Activated CD4-positive, alpha-beta T cell treated with anti-CD3 and anti-CD28 coated beads for 36 hours (primary cell): ENCODE measurements at regions of chr20 and their contacts with region 1.

Region 1: GRCh38 chr20:33211817-33212424 is 5.2 kb upstream of the BPIFA3 start:
- DNase-seq: peak; percentile 53
- ATAC-seq: peak; percentile 44
- H3K4me3 Mint-ChIP-seq: no peak overlapping the region
- H3K27ac Mint-ChIP-seq: no peak overlapping the region
- H3K4me1 Mint-ChIP-seq: no peaks in the 10 kb centered on the region
- H3K27me3 Mint-ChIP-seq: peaks cover 34% of the 10 kb centered on the region

Region 2: DNA sequence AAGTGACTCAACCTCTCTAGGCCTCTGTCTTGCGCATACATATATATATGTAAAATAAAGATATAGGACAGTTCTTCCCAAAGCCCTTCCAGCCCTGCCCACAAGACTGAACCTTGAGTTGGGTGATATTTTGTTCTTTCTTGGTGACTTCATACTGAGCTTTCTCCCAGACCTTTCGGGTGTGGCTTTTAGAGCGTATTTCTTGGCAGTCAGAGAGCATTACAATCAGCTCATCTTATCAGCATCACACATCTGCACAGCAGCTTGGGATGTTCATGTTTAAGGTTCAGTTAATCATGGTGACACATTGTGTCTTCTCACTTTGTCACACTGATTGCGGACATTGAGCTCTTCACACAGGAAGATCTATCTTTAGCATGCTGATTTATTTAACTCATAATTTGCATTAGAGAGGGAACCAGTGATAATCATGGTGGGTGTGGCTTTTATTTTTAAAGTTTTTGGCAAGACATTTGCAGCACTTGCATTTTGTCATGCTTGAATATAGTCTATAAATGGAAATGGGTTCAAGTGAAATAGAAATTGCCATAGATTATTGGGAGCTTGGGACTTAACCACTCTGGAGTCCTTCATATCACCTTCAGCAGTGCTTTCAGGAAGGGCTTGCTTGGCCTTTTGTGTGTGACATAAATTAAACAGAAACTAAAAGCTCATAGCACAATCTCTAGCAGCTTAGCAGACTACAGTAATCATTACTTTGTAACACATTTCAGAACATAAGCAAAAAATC is 926.1 kb before region 1 on chr20:
- CTCF ChIA-PET with region 1: no interaction called
- POLR2A ChIA-PET with region 1: no interaction called
- intact Hi-C with region 1: no loop called
- DNase-seq: peak; percentile 70
- ATAC-seq: peak; percentile 83
- H3K4me3 Mint-ChIP-seq: peak overlapping the region; percentile 58
- H3K27ac Mint-ChIP-seq: peak overlapping the region; percentile 97
- H3K4me1 Mint-ChIP-seq: peaks cover 88% of the 10 kb centered on the region
- H3K27me3 Mint-ChIP-seq: no peaks in the 10 kb centered on the region

Region 3: DNA sequence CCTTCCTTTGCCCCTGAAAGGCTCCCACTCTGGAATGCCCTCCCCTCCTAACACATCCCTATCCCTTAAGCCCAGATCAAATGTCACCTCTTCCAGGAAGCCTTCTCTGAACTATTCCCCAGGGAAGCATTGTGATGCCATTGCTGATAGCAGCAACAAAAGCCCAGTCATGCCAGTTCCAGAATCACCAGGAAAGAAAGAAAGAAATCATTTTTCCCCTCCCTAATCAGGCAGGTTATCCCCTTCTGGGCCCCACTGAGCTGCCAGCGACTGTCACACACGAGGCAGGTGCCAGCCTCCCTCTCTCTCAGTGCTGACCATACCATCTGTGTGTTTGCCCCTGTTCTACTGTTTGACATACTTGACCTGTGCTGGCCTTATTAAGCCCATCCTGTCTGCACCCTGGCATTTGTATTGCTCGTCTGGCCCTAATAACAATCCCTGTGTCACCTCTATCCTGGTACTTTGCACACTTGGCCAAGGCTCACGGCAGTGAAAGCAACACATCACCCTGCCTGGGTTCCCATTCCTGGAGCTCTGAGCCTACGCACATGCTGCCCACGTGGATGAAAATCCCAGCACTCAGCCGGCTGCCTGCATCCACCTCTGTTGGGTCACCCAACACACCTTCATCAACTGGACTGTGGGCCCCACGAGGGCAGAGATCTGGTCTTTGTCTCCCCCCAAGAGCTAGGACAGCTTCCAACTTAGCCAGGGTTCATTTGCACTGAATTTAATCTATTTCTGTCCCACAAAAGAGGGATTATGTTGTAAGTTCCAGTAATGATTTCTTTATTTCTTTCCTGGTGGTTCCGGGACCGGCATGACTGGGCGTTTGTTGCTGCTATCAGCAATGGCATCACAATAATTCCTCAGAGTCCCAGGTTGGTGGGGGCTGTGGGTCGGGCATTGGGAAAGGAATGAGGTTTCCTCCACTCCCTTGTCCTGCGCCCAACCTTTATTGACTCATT is 65.8 kb after region 1 on chr20:
- CTCF ChIA-PET with region 1: no interaction called
- POLR2A ChIA-PET with region 1: no interaction called
- intact Hi-C with region 1: loop called in 1 of 2 experiments (anchors 10 kb)
- DNase-seq: no peak
- ATAC-seq: no peak
- H3K4me3 Mint-ChIP-seq: no peak overlapping the region
- H3K27ac Mint-ChIP-seq: no peak overlapping the region
- H3K4me1 Mint-ChIP-seq: no peaks in the 10 kb centered on the region
- H3K27me3 Mint-ChIP-seq: peaks cover 2% of the 10 kb centered on the region

Region 4: GRCh38 chr20:33359462-33359861 is 147.5 kb after region 1 on chr20:
- CTCF ChIA-PET with region 1: no interaction called
- POLR2A ChIA-PET with region 1: no interaction called
- intact Hi-C with region 1: no loop called
- DNase-seq: no peak
- ATAC-seq: no peak
- H3K4me3 Mint-ChIP-seq: no peak overlapping the region
- H3K27ac Mint-ChIP-seq: no peak overlapping the region
- H3K4me1 Mint-ChIP-seq: no peaks in the 10 kb centered on the region
- H3K27me3 Mint-ChIP-seq: no peaks in the 10 kb centered on the region